Activated CD8-positive, alpha-beta T cell treated with anti-CD3 and anti-CD28 coated beads, Interleukin-2, amount 10 ng/mL, durations not matched to agents 7 days and 5 days (primary cell): ENCODE measurements at regions of chr1 and their contacts with region 1.

Region 1: GRCh38 chr1:248858891-248859889 is at the start of gene ZNF692:
- DNase-seq: peak; percentile 98
- ATAC-seq: peak; percentile 87
- H3K4me3 Mint-ChIP-seq: peak within 1 kb of the TSS; percentile 92
- H3K27ac Mint-ChIP-seq: peak within 1 kb of the TSS; percentile 97
- H3K4me1 Mint-ChIP-seq: peaks cover 36% of the 10 kb centered on the region
- H3K27me3 Mint-ChIP-seq: peaks cover 6% of the 10 kb centered on the region
- total RNA-seq, gene ZNF692: 52.7 to 66.8 TPM

Region 2: DNA sequence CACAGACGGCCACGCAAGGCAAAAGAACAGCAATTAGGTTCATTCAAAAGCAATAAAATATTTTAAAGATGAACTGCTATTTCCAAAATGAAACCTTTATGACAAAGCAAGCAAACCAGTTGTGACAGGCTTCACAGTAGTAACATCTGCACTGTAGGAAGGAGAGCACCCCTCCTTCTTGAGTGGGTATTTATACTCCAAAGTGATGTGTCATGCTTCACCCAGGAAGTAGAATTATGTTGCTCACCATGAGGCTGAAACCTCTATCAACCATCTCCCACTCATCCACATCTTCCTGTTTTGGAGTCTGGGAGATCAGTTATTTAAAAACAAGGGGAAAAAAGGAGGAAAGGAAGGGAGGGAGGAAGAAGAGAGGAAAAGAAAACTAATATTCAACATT is 262.6 kb before region 1 on chr1:
- CTCF ChIA-PET with region 1: no interaction called
- POLR2A ChIA-PET with region 1: no interaction called
- DNase-seq: no peak
- ATAC-seq: no peak
- H3K4me3 Mint-ChIP-seq: no peak overlapping the region
- H3K27ac Mint-ChIP-seq: no peak overlapping the region
- H3K4me1 Mint-ChIP-seq: peaks cover 9% of the 10 kb centered on the region
- H3K27me3 Mint-ChIP-seq: no peaks in the 10 kb centered on the region

Region 3: DNA sequence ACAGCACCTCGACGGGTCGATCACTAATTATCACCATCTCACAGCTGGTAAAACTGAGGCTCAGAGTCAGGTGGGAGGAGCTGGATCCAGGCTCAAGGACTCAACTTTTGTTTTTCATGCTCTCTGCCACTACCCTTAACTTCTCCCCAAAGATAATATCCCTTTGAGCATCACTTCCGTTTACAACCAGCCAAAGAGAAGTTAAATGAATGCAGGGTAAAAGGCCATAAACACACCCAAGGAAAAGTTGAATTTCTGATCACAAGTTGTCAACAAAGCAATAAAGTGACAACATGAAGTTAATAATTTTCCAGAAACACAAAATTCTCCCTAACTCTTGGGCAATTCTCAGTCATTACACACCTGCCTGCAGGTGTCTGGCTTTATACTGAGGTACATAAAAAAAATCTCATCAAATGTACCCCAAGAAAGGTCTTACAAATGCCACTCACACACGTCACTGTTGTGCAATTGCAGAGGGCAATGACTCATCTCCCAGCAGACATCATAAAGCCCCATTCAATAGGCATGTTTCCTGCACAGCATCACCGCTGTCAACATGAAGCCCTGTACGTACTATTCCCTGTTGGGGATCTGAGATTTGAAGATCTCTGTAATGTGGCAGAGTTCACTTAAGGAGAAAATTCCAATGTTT is 227.7 kb before region 1 on chr1:
- CTCF ChIA-PET with region 1: no interaction called
- POLR2A ChIA-PET with region 1: no interaction called
- DNase-seq: no peak
- ATAC-seq: no peak
- H3K4me3 Mint-ChIP-seq: no peak overlapping the region
- H3K27ac Mint-ChIP-seq: no peak overlapping the region
- H3K4me1 Mint-ChIP-seq: no peaks in the 10 kb centered on the region
- H3K27me3 Mint-ChIP-seq: peaks cover 2% of the 10 kb centered on the region

Region 4: DNA sequence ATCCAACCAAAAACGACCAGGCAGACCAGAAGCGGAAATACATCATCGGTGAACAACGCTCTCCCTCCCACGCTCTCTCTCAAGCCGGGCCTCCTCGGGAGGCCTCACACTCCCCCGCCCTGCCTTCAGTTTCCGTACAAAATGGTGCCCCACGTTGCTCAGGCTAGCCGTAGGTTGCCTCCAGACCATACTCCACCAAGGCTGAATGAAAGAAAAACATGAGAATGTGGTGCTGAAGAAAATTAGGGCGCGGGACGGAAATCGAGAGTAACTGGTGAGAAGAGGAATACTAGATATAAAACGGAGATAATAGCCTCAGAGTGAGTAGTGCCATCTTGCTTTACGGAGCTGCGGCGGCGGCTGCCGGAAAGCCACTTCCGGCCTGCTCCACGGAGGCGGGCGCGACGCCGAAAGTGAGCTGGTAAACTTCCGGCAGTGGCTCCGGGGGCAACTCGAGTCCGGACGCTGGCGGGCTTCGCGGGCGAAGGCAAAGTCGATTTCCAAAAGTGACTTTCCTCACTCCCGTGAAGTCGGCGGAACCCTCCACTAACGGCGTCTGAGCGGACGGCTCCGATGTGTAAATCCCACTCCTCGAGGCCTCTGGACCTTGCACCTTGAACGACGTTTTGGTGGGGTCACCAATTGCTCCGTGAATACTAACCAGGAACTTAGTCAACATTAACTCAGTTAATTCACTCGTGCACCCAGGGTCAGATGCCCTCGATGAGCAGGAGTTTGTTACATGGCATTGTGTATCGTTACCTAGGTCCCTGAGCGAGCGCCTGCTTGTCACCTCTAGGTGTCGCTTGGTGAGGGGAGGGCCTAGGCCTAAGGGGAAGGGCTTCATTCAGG is 33.1 kb before region 1 on chr1 and contains the start of gene SH3BP5L:
- CTCF ChIA-PET with region 1: interaction called, 15 read pairs
- POLR2A ChIA-PET with region 1: interaction called, 17 read pairs
- DNase-seq: peak; percentile 94
- ATAC-seq: peak; percentile 90
- H3K4me3 Mint-ChIP-seq: peak within 1 kb of the TSS; percentile 84
- H3K27ac Mint-ChIP-seq: peak within 1 kb of the TSS; percentile 98
- H3K4me1 Mint-ChIP-seq: peaks cover 46% of the 10 kb centered on the region
- H3K27me3 Mint-ChIP-seq: peaks cover 2% of the 10 kb centered on the region
- total RNA-seq, gene SH3BP5L: 28.9 to 31.4 TPM

Region 5: GRCh38 chr1:248837794-248838356 is 21.3 kb before region 1 on chr1 and contains the start of gene ZNF672:
- CTCF ChIA-PET with region 1: interaction called, 33 read pairs
- POLR2A ChIA-PET with region 1: interaction called, 43 read pairs
- DNase-seq: peak; percentile 96
- ATAC-seq: peak; percentile 91
- H3K4me3 Mint-ChIP-seq: no peak within 1 kb of the TSS
- H3K27ac Mint-ChIP-seq: peak within 1 kb of the TSS; percentile 94
- H3K4me1 Mint-ChIP-seq: peaks cover 24% of the 10 kb centered on the region
- H3K27me3 Mint-ChIP-seq: peaks cover 2% of the 10 kb centered on the region
- total RNA-seq, gene ZNF672: 48.4 to 54.5 TPM

Region 6: GRCh38 chr1:248873409-248873992 is 14.3 kb after region 1 on chr1:
- CTCF ChIA-PET with region 1: interaction called, 19 read pairs
- POLR2A ChIA-PET with region 1: interaction called, 18 read pairs
- DNase-seq: peak; percentile 94
- ATAC-seq: peak; percentile 86
- H3K4me3 Mint-ChIP-seq: peak overlapping the region; percentile 87
- H3K27ac Mint-ChIP-seq: peak overlapping the region; percentile 90
- H3K4me1 Mint-ChIP-seq: peaks cover 22% of the 10 kb centered on the region
- H3K27me3 Mint-ChIP-seq: peaks cover 10% of the 10 kb centered on the region